ENCODE measurements at regions of chr11 and their contacts with region 1.

Region 1: DNA sequence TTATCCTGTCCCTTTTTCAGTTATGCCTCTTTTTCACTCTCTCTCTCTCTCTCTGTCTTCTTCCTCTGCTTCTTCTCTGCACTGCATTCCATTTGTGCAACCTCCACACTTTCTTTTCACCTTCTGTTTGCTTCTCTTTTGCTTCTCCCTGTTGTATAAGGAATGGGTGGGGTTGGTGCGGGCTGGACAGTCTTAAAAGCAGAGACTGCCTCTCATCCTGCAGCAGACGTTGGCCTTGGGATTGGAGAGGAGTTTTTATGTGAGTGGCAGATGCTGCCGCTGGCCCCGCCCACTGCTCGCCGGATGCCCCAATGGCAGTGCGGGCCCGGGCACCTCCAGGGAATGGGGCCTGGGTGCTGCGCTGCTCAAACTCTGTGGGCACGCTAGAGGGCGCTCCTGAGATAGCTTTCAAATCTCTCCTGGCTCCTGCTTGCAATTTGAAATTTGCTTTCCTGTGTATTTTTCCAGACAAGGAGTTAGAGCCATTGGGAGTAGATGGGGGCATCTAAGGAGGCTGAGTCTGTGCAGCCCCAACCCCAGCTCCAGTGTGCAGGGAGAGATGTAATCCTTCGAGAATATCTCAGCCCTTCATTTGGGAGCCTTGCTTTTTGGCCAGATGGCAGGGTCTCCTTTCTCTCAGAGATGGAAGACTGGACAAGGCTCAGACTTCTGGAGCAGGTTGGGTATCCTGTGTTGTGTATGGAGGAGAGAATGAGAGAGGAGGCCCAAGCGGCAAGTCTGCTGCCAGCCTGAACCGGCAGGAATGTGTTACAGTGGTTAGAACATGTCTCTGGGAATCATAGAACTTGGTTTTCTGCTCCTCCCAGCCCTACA is 81.2 kb downstream of the GRAMD1B start:
- DNase-seq: peak; percentile 84
- H3K4me3 Mint-ChIP-seq: no peak overlapping the region
- H3K27ac Mint-ChIP-seq: no peak overlapping the region
- H3K4me1 Mint-ChIP-seq: peaks cover 17% of the 10 kb centered on the region
- H3K27me3 Mint-ChIP-seq: no peaks in the 10 kb centered on the region

Region 2: GRCh38 chr11:123413636-123414035 is 97.6 kb before region 1 on chr11:
- CTCF ChIA-PET with region 1: no interaction called
- POLR2A ChIA-PET with region 1: no interaction called
- intact Hi-C with region 1: no loop called
- DNase-seq: no peak
- H3K4me3 Mint-ChIP-seq: no peak overlapping the region
- H3K27ac Mint-ChIP-seq: no peak overlapping the region
- H3K4me1 Mint-ChIP-seq: no peaks in the 10 kb centered on the region
- H3K27me3 Mint-ChIP-seq: peaks cover 6% of the 10 kb centered on the region

Region 3: GRCh38 chr11:123580557-123581275 is 69.5 kb after region 1 on chr11:
- CTCF ChIA-PET with region 1: interaction called, 17 read pairs
- POLR2A ChIA-PET with region 1: no interaction called
- intact Hi-C with region 1: loop called (anchors 1 kb)
- DNase-seq: peak; percentile 79
- H3K4me3 Mint-ChIP-seq: no peak overlapping the region
- H3K27ac Mint-ChIP-seq: no peak overlapping the region
- H3K4me1 Mint-ChIP-seq: peaks cover 12% of the 10 kb centered on the region
- H3K27me3 Mint-ChIP-seq: no peaks in the 10 kb centered on the region

Region 4: DNA sequence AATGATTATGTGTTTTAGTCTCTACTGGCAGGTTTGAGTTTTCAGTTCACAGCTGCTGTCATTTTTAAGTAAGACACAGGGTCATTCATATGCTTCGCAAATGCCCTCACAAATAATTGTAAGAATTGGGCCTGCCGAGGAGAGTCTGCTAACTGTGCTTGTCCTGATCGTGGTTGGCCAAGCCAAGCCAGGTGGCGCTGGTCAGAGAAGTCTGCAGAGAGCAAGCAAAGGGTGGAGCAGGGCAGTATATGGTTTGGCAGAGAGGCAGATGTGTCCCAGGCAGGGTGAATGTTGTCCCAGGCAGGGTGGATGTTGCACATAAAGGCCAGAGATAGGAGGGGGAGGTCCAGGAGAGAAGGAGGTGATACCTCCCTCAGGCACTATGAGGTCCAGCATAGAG is 90.5 kb after region 1 on chr11:
- CTCF ChIA-PET with region 1: no interaction called
- POLR2A ChIA-PET with region 1: no interaction called
- intact Hi-C with region 1: no loop called
- DNase-seq: no peak
- H3K4me3 Mint-ChIP-seq: no peak overlapping the region
- H3K27ac Mint-ChIP-seq: no peak overlapping the region
- H3K4me1 Mint-ChIP-seq: no peaks in the 10 kb centered on the region
- H3K27me3 Mint-ChIP-seq: no peaks in the 10 kb centered on the region